Aorta (tissue), 5 donors: ENCODE measurements at regions of chr2 and their contacts with region 1.

Region 1: GRCh38 chr2:119702918-119703401 is 24.0 kb downstream of the TMEM177 start:
- DNase-seq: peak; percentile 73 to 85
- ATAC-seq: peak; percentile 92
- H3K4me3 ChIP-seq: no peak overlapping the region
- H3K27ac ChIP-seq: no peak overlapping the region
- H3K4me1 ChIP-seq: no peaks in the 10 kb centered on the region
- H3K27me3 ChIP-seq: no peaks in the 10 kb centered on the region

Region 2: GRCh38 chr2:119647440-119648169 is 55.4 kb before region 1 on chr2:
- intact Hi-C with region 1: no loop called
- DNase-seq: peak; percentile 73 to 79
- ATAC-seq: no peak
- H3K4me3 ChIP-seq: no peak overlapping the region
- H3K27ac ChIP-seq: no peak overlapping the region
- H3K4me1 ChIP-seq: no peaks in the 10 kb centered on the region
- H3K27me3 ChIP-seq: no peaks in the 10 kb centered on the region

Region 3: DNA sequence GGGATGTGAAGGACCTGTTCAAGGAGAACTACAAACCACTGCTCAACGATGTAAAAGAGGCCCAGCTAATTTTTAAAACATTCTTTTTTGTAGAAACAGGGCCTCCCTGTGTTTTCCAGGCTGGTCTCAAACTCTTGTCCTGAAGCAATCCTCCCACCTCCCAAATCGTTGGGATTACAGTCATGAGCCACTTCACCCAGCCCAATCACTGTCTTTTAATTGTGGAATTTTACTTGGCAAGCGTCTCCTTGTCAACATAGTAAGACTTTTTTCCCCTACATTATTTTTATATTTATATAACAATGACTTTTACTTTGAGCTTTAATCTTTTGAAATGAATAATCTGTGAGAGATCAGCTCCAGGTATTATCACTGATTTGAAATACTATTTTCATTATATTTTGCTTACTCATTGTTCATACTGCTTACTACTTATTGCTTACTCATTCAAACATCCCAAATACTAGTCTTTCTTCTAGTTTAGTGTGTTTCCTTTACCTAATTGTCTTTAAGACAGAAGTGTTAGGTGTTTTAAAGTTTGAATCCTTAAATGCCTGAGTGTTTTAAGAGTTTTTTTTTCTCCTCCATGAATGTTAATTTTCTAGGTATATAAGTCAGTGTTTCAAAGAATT is 105.7 kb after region 1 on chr2:
- intact Hi-C with region 1: no loop called
- DNase-seq: no peak
- ATAC-seq: no peak
- H3K4me3 ChIP-seq: no peak overlapping the region
- H3K27ac ChIP-seq: no peak overlapping the region
- H3K4me1 ChIP-seq: no peaks in the 10 kb centered on the region
- H3K27me3 ChIP-seq: no peaks in the 10 kb centered on the region

Region 4: GRCh38 chr2:120174963-120175581 is 472.1 kb after region 1 on chr2:
- intact Hi-C with region 1: loop called in 1 of 2 experiments (anchors 2 kb)
- DNase-seq: no peak
- ATAC-seq: peak; percentile 72
- H3K4me3 ChIP-seq: no peak overlapping the region
- H3K27ac ChIP-seq: no peak overlapping the region
- H3K4me1 ChIP-seq: no peaks in the 10 kb centered on the region
- H3K27me3 ChIP-seq: no peaks in the 10 kb centered on the region